SK-N-SH (cell line): ENCODE measurements at regions of chr19 and their contacts with region 1.

Region 1: GRCh38 chr19:18281082-18282020 is at the start of gene JUND:
- DNase-seq: peak; percentile 95
- H3K4me3 ChIP-seq: peak within 1 kb of the TSS; percentile 74 to 92
- H3K27ac ChIP-seq: peak within 1 kb of the TSS; percentile 99 to 100
- H3K4me1 ChIP-seq: peaks cover 9 to 16% of the 10 kb centered on the region in 2 experiments; a peak in 3 of 4 replicates
- H3K27me3 ChIP-seq: no peaks in the 10 kb centered on the region
- CTCF ChIP-seq: 0 out of 2 replicates have a peak, but pooled peaks have one; percentile 5
- EP300 ChIP-seq: 0 out of 4 replicates have a peak, but pooled peaks of 1 of the 2 experiments have one; percentile 4
- RAD21 ChIP-seq: no peak
- polyA plus RNA-seq, gene JUND: 92.5 and 115 TPM in 2 replicates

Region 2: GRCh38 chr19:18203863-18204393 is 77.4 kb before region 1 on chr19 and contains the start of gene RAB3A:
- CTCF ChIA-PET with region 1: interaction called, 19 read pairs
- POLR2A ChIA-PET with region 1: interaction called, 3 read pairs
- DNase-seq: peak; percentile 96
- H3K4me3 ChIP-seq: peak within 1 kb of the TSS; percentile 71 to 82
- H3K27ac ChIP-seq: peak within 1 kb of the TSS; percentile 85 to 93
- H3K4me1 ChIP-seq: peaks cover 4 to 20% of the 10 kb centered on the region in 2 experiments; a peak in 2 of 4 replicates
- H3K27me3 ChIP-seq: no peaks in the 10 kb centered on the region
- CTCF ChIP-seq: no peak
- EP300 ChIP-seq: no peak
- RAD21 ChIP-seq: no peak
- polyA plus RNA-seq, gene RAB3A: 9.1 and 9.7 TPM in 2 replicates

Region 3: DNA sequence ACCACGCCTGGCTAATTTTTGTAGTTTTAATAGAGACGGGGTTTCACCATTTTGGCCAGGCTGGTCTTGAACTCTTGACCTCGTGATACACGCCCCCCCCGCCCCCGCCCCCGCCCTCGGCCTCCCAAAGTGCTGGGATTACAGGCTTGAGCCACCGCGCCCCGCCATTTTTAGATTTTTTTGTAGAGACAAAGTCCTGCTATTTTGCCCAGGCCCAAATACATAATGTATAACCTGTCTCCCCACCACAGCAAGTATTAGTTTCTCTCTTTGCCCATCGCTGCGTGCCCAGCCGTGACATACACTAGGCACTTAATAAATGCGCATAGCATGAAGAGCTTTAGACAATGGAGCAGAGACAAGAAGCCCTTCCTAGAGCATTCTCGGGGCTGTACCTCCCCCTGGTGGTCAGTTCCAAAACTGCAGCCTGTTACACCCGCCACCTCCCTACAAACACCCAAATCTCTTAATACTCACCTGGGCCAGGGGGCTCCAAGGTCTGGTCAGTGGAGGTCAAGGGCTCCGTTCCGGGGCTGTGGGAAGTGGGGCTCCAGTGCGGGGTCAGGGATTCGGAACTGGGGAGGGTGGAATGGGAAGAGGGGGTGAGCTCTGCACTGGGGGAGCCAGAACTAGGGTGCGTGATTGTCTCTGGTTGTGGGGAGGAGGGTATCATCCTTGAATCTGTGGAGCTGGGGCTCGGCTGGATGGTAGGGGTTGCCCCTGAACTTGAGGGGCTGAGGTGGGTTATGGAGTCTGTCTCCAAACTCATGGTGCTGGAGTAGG is 29.6 kb before region 1 on chr19:
- CTCF ChIA-PET with region 1: interaction called, 75 read pairs
- POLR2A ChIA-PET with region 1: no interaction called
- DNase-seq: peak; percentile 86
- H3K4me3 ChIP-seq: no peak overlapping the region
- H3K27ac ChIP-seq: no peak overlapping the region
- H3K4me1 ChIP-seq: no peaks in the 10 kb centered on the region
- H3K27me3 ChIP-seq: peaks cover 19% of the 10 kb centered on the region
- CTCF ChIP-seq: peak; percentile 96
- EP300 ChIP-seq: no peak
- RAD21 ChIP-seq: peak; percentile 96

Region 4: DNA sequence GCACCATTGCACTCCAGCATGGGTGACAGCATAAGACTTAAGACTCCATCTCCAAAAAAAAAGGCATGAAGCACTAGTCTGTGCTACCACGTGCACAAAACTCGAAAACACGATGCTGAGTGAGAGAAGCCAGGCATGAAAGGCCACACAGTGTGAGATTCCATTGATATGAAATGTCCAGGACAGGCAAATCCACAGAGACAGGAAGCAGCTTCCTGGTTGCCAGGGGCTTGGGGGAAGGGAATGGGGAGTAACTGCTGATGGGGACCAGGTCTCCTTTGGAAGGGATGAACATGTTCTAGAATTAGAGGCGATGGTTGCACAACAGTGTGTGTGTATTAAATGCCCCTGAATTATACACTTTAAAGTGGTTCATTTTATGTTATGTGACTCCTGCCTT is 16.0 kb after region 1 on chr19:
- CTCF ChIA-PET with region 1: interaction called, 69 read pairs
- POLR2A ChIA-PET with region 1: interaction called, 112 read pairs
- DNase-seq: no peak
- H3K4me3 ChIP-seq: no peak overlapping the region
- H3K27ac ChIP-seq: no peak overlapping the region
- H3K4me1 ChIP-seq: peaks cover 18 to 19% of the 10 kb centered on the region in 2 experiments; a peak in 1 of 4 replicates
- H3K27me3 ChIP-seq: no peaks in the 10 kb centered on the region
- CTCF ChIP-seq: no peak
- EP300 ChIP-seq: no peak
- RAD21 ChIP-seq: no peak

Region 5: GRCh38 chr19:18328340-18329034 is 47.1 kb after region 1 on chr19:
- CTCF ChIA-PET with region 1: interaction called, 216 read pairs
- POLR2A ChIA-PET with region 1: interaction called, 34 read pairs
- DNase-seq: peak; percentile 94
- H3K4me3 ChIP-seq: peak overlapping the region; percentile 39 to 52
- H3K27ac ChIP-seq: peak overlapping the region; percentile 63 to 84
- H3K4me1 ChIP-seq: peaks cover 10 to 14% of the 10 kb centered on the region in 2 experiments; a peak in 2 of 4 replicates
- H3K27me3 ChIP-seq: no peaks in the 10 kb centered on the region
- CTCF ChIP-seq: peak; percentile 93
- EP300 ChIP-seq: peak in 1 of 2 experiments; percentile 53; a peak in 2 of 4 replicates
- RAD21 ChIP-seq: peak; percentile 90

Region 6: DNA sequence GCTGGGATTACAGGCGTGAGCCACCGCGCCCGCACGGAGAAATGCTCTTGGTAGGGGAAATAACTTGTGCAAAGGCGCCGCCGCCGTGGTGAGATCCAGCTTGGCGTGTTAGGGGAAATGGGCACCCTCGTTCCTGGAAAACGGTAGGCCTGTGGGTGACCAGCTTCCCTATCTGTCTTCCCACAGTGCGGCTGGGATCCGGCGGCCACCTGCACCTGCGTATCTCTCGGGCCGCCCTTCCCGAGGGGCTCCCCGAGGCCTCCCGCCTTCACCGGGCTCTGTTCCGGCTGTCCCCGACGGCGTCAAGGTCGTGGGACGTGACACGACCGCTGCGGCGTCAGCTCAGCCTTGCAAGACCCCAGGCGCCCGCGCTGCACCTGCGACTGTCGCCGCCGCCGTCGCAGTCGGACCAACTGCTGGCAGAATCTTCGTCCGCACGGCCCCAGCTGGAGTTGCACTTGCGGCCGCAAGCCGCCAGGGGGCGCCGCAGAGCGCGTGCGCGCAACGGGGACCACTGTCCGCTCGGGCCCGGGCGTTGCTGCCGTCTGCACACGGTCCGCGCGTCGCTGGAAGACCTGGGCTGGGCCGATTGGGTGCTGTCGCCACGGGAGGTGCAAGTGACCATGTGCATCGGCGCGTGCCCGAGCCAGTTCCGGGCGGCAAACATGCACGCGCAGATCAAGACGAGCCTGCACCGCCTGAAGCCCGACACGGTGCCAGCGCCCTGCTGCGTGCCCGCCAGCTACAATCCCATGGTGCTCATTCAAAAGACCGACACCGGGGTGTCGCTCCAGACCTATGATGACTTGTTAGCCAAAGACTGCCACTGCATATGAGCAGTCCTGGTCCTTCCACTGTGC is 107.0 kb after region 1 on chr19:
- CTCF ChIA-PET with region 1: interaction called, 35 read pairs
- POLR2A ChIA-PET with region 1: interaction called, 3 read pairs
- DNase-seq: peak; percentile 98
- H3K4me3 ChIP-seq: peak overlapping the region; percentile 51 to 60; a peak in 3 of 4 replicates
- H3K27ac ChIP-seq: no peak overlapping the region
- H3K4me1 ChIP-seq: peaks cover 0 to 9% of the 10 kb centered on the region in 2 experiments; a peak in 1 of 4 replicates
- H3K27me3 ChIP-seq: no peaks in the 10 kb centered on the region
- CTCF ChIP-seq: peak; percentile 85
- EP300 ChIP-seq: no peak
- RAD21 ChIP-seq: peak; percentile 59

Region 7: GRCh38 chr19:18469069-18469846 is 187.9 kb after region 1 on chr19:
- CTCF ChIA-PET with region 1: no interaction called
- POLR2A ChIA-PET with region 1: no interaction called
- DNase-seq: peak; percentile 82
- H3K4me3 ChIP-seq: no peak overlapping the region; a peak in 1 of 4 replicates
- H3K27ac ChIP-seq: no peak overlapping the region
- H3K4me1 ChIP-seq: peaks cover 0 to 5% of the 10 kb centered on the region in 2 experiments; a peak in 1 of 4 replicates
- H3K27me3 ChIP-seq: no peaks in the 10 kb centered on the region
- CTCF ChIP-seq: peak; percentile 84
- EP300 ChIP-seq: no peak
- RAD21 ChIP-seq: peak; percentile 59